ENCODE measurements at regions of chr14 and their contacts with region 1.

Region 1: GRCh38 chr14:69726761-69727511 is 40.0 kb upstream of the SRSF5 start:
- DNase-seq: peak in 1 of 2 donors; percentile 52
- ATAC-seq: peak; percentile 86 to 92
- H3K4me3 ChIP-seq: peak overlapping the region; percentile 17 to 55 (median 46)
- H3K27ac ChIP-seq: peak overlapping the region in 3 of 4 donors; percentile 30 to 47 (median 44)
- H3K4me1 ChIP-seq: peaks cover 0 to 4% of the 10 kb centered on the region in 2 donors
- H3K27me3 ChIP-seq: no peaks in the 10 kb centered on the region
- CTCF ChIP-seq: peak; percentile 96 to 99 (median 98)
- POLR2A ChIP-seq: no peak

Region 2: GRCh38 chr14:69580009-69580577 is 146.8 kb before region 1 on chr14:
- in situ Hi-C with region 1: loop called in 2 of 4 experiments (anchors 5 to 10 kb)
- intact Hi-C with region 1: loop called (anchors 1 kb)
- DNase-seq: no peak
- ATAC-seq: no peak
- H3K4me3 ChIP-seq: no peak overlapping the region
- H3K27ac ChIP-seq: no peak overlapping the region
- H3K4me1 ChIP-seq: peaks cover 3 to 9% of the 10 kb centered on the region in 2 donors
- H3K27me3 ChIP-seq: peaks cover 7 to 20% (median 13%) of the 10 kb centered on the region in 3 donors
- CTCF ChIP-seq: no peak
- POLR2A ChIP-seq: no peak

Region 3: GRCh38 chr14:69586404-69586803 is 140.5 kb before region 1 on chr14:
- in situ Hi-C with region 1: loop called in 2 of 4 experiments (anchors 5 to 10 kb)
- intact Hi-C with region 1: loop called (anchors 1 kb)
- DNase-seq: no peak
- ATAC-seq: no peak
- H3K4me3 ChIP-seq: no peak overlapping the region
- H3K27ac ChIP-seq: peak overlapping the region in 1 of 4 donors; percentile 38
- H3K4me1 ChIP-seq: peaks cover 3 to 13% of the 10 kb centered on the region in 2 donors
- H3K27me3 ChIP-seq: no peaks in the 10 kb centered on the region
- CTCF ChIP-seq: no peak
- POLR2A ChIP-seq: no peak

Region 4: DNA sequence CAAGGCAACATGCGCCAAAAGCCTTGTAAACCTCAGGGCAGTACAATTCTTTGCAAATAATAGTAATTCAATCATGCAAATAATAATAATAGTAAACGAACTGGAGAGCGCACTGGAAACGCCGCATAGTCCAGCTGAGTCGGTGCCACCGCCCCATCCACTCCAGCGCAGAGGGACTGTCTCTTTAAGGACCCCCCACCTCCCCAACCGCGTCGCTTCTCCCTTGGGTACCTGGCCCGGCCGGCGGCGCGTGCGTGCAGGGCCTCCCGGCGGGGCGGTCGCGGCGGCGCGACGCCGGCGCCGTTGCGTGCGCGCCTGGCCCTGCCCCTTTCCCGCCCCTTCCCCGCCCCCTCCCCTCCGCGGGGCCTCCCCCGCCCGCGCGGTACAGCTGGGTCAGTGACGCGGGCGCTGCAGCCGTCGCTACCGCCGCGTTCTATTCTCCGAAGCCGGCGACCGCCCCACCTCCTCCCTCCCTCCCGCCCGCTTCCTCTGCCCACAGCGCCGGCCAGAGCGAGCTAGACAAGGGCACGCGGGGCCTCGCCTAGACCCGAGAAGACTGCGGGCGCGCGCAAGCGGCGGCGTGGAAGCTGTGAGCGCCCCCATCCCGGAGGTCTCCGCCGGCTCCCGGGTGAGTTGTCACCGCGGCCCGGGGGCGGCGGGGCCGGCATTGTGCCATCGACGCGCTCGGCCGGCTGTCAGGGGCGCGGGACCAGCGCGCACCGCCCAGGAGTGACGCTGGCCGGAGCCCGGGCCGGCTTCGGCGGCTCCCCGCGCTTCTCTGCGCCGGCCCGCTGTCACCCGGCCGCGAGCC is 115.5 kb before region 1 on chr14 and contains the start of gene SUSD6:
- in situ Hi-C with region 1: loop called in 2 of 4 experiments (anchors 5 to 10 kb)
- intact Hi-C with region 1: no loop called
- DNase-seq: peak; percentile 81 to 88
- ATAC-seq: peak; percentile 81 to 83
- H3K4me3 ChIP-seq: peak within 1 kb of the TSS; percentile 54 to 89 (median 74)
- H3K27ac ChIP-seq: peak within 1 kb of the TSS; percentile 91 to 99 (median 96)
- H3K4me1 ChIP-seq: peaks cover 49% of the 10 kb centered on the region in 2 donors
- H3K27me3 ChIP-seq: no peaks in the 10 kb centered on the region
- CTCF ChIP-seq: no peak
- POLR2A ChIP-seq: peak; percentile 78 to 83
- total RNA-seq, gene SUSD6: 11.9 to 26.3 (median 16.2) TPM

Region 5: DNA sequence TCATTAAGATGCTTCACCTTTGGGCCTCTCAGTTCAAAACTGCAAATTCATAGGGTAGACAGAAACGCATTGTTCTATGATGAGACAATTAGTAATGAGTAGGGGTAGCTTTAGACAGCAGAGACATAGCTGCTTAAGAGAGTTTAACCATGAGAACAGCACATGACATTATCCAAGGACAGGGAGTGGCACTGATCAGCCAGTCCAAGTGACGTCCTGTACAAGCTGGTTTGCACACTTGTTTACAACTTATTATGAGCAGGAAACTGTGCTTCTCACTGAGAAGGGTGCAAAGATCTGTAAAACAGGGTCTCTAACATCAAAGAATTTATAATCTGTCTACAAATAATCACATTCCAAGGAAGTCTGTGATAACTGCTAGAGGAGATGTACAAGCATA is 28.8 kb after region 1 on chr14:
- in situ Hi-C with region 1: no loop called
- intact Hi-C with region 1: no loop called
- DNase-seq: no peak
- ATAC-seq: no peak
- H3K4me3 ChIP-seq: no peak overlapping the region
- H3K27ac ChIP-seq: no peak overlapping the region
- H3K4me1 ChIP-seq: no peaks in the 10 kb centered on the region
- H3K27me3 ChIP-seq: no peaks in the 10 kb centered on the region
- CTCF ChIP-seq: no peak
- POLR2A ChIP-seq: no peak

Region 6: GRCh38 chr14:71478542-71478941 is 1751.6 kb after region 1 on chr14:
- in situ Hi-C with region 1: no loop called
- intact Hi-C with region 1: no loop called
- DNase-seq: no peak
- ATAC-seq: no peak
- H3K4me3 ChIP-seq: no peak overlapping the region
- H3K27ac ChIP-seq: no peak overlapping the region
- H3K4me1 ChIP-seq: peaks cover 0 to 6% of the 10 kb centered on the region in 2 donors
- H3K27me3 ChIP-seq: no peaks in the 10 kb centered on the region
- CTCF ChIP-seq: no peak
- POLR2A ChIP-seq: no peak

Measured in gastrocnemius medialis (tissue), 4 donors.